Breast epithelium (tissue), 4 donors: ENCODE measurements at regions of chr14 and their contacts with region 1.

Region 1: GRCh38 chr14:38016497-38016896 is 191.2 kb upstream of the SSTR1 start:
- DNase-seq: no peak
- H3K4me3 ChIP-seq: no peak overlapping the region
- H3K27ac ChIP-seq: no peak overlapping the region
- H3K4me1 ChIP-seq: no peaks in the 10 kb centered on the region
- H3K27me3 ChIP-seq: no peaks in the 10 kb centered on the region
- CTCF ChIP-seq: no peak
- POLR2A ChIP-seq: no peak

Region 2: GRCh38 chr14:38079886-38080285 is 63.4 kb after region 1 on chr14:
- intact Hi-C with region 1: loop called (anchors 2 kb)
- DNase-seq: no peak
- H3K4me3 ChIP-seq: no peak overlapping the region
- H3K27ac ChIP-seq: no peak overlapping the region
- H3K4me1 ChIP-seq: no peaks in the 10 kb centered on the region
- H3K27me3 ChIP-seq: no peaks in the 10 kb centered on the region
- CTCF ChIP-seq: no peak
- POLR2A ChIP-seq: no peak